ENCODE measurements at regions of chr3 and their contacts with region 1.

Region 1: GRCh38 chr3:188954590-188955208 is 217.1 kb upstream of the TPRG1 start:
- DNase-seq: peak; percentile 71 to 85
- ATAC-seq: peak; percentile 82

Region 2: GRCh38 chr3:187738331-187739093 is 1216.2 kb before region 1 on chr3:
- intact Hi-C with region 1: loop called (anchors 5 to 10 kb)
- DNase-seq: peak; percentile 86 to 91
- ATAC-seq: peak; percentile 67

Region 3: DNA sequence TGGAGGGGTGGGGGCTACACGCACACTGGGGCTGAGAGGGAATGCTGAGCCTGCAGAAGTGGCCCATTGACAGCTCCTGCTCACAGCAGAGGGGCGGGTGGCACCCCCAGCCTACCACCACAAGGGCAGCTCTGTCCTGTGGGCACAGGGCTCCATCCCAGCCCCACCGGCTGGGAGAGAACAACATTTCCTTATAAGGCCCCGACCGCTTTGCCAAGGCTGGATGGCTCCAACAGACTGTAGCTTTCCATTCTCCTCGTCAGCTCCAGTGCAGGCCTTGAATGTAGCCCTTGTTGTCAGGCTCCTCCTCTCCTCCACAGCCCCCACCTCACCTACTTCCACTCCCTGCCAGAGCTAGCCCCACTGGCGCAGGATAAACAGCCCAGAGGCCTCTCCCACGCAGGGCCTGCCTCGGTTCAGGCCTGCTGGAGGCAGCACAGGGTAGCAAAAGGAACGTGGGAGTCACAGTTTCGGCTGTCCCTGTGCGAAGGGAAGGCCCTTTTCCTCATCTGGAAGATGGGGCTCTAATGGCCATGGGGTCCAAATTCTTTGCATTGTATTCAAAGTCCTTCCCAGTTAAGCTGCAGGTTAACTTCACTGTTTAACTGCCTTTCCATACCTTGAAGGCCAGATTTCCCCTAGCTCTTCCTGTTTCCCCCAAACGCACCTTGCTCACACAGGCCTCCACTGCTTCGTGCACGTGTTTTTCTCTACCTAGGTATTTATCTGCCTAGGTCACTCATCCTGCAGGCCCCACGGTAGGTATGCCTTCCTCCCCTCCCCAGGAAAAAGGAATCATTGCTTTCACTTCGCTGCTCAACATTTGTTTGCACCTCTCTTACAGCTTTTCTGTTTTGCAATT is 902.3 kb before region 1 on chr3:
- intact Hi-C with region 1: loop called in 1 of 2 experiments (anchors 10 kb)
- DNase-seq: peak; percentile 57 to 91
- ATAC-seq: peak; percentile 85

Region 4: GRCh38 chr3:188807006-188807405 is 147.7 kb before region 1 on chr3:
- intact Hi-C with region 1: no loop called
- DNase-seq: no peak
- ATAC-seq: no peak

Region 5: GRCh38 chr3:189148081-189148507 is 193.4 kb after region 1 on chr3:
- intact Hi-C with region 1: loop called in 1 of 2 experiments (anchors 5 kb)
- DNase-seq: peak; percentile 43 to 66
- ATAC-seq: peak; percentile 77

Region 6: DNA sequence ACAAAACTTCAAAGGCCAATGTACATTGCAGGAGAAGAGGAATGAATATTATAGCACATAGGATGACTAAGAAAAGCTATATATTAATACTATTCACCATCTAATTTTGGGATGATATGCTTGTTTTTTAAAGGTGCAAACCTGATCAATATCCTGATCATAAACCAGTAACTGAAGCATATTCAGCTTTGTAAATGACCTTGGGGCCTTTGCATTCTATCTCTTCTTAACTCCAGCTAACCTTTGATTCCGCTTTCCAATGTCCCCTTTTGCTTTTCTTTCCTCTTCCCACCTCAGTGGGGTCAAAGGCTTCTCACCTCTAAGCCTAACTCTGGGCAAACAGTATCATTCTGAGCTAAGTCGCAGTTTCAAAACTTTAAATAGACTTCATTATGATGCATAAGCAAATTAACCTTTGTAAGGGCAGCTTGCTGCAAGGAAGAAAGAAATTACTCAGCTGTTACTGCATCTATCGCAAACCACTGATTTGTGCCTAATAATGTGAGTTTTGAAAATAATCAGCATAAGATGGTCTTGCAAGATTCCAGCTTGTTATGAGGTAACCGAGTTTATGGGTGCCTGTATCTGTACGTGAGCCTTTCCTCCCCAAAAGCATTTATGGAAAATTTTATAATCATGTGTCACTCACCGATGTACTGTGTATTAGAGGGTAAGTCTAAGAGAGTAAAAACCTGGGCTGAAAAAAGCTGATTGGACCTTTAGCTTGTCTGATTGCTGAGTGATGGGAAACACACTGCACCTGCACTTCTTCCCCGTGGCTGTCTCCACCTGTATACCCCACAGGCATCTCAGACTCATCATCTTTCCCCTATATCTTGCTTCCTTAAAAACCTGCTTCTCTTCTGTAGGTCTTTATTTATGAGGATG is 333.9 kb after region 1 on chr3:
- intact Hi-C with region 1: no loop called
- DNase-seq: no peak
- ATAC-seq: no peak